BJ (cell line): ENCODE measurements at regions of chr14 and their contacts with region 1.

Region 1: DNA sequence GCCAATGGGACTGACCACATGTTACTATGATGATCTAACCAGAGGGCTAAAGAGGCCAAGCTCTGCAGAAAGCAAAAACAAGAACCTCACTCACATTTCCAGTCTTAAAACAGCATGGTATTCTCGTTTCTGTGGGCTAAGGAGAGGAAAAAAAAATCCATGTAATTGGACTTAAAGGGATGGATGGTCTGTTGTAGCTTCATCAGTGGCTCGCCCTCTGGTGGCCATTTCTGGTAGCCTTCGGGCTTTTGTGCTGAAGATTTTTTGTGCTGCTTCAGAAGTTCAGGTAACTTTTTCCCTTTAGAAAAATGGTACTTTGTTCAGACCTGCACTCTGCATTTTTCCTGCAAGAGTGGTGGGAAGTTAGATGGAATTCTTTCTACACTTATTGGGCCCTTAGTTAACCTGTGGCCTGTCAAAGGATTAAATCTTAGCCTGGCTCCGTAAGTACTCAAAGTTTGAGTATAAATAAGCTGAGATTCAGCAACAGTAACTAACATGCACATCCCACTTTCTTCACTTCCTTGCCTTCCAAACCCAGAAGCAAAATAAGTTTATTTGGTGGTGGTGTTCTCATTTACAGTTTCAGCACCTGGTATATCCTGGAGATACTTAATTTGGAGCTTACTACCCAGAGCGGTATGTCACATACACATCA is 22.3 kb downstream of the DCAF4 start:
- DNase-seq: no peak
- H3K4me3 ChIP-seq: no peak overlapping the region
- H3K27me3 ChIP-seq: no peaks in the 10 kb centered on the region
- CTCF ChIP-seq: peak; percentile 86

Region 2: GRCh38 chr14:72503696-72504368 is 444.8 kb before region 1 on chr14:
- CTCF ChIA-PET with region 1: interaction called, 14 read pairs
- POLR2A ChIA-PET with region 1: no interaction called
- DNase-seq: no peak
- H3K4me3 ChIP-seq: no peak overlapping the region
- H3K27me3 ChIP-seq: peaks cover under 1% of the 10 kb centered on the region; the same call in 1 of the 2 replicates
- CTCF ChIP-seq: no peak

Region 3: DNA sequence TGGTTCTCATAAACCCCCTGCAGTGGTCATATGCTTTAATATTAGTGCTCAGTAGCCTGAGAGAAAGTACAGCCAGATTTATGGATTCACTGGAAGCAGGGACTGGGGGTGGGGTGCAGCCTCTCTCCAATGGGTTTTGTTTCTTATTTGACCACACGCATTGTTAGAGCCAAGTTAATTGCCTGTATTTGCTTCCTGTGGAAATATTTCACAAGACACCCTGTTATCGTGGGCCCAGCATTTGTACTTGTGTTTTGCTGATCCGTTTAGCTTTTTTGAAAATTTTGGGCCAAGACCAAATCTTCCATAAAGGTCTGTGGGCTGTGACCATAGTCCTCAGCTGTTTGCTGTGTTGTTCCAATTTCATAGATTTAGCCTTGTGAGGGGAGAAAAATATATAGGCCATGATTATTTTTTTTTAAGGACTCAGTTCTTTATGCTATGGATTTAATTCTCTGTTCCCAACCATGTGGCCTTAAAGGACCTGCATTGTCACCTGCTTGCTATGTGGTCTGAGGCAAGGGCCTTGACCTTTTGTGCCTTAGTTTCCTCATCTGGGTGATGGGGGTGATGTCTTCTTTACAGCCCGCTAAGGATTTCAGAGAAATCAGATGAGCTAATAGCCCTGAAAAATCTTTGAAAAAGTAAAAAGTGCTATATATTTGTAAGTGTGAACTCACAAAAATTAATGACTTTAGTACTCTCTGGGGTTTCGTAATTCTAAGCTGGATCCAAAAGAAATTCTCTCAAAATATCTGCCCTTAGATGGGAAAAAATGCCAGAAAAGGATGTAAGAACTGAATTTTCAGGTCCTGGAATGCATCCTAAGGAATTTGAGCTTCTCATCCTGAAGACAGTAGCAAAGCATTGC is 425.0 kb before region 1 on chr14:
- CTCF ChIA-PET with region 1: interaction called, 13 read pairs
- POLR2A ChIA-PET with region 1: no interaction called
- DNase-seq: no peak
- H3K4me3 ChIP-seq: no peak overlapping the region
- H3K27me3 ChIP-seq: no peaks in the 10 kb centered on the region
- CTCF ChIP-seq: no peak

Region 4: GRCh38 chr14:72869407-72870329 is 78.9 kb before region 1 on chr14:
- CTCF ChIA-PET with region 1: no interaction called
- POLR2A ChIA-PET with region 1: no interaction called
- DNase-seq: no peak
- H3K4me3 ChIP-seq: no peak overlapping the region
- H3K27me3 ChIP-seq: no peaks in the 10 kb centered on the region
- CTCF ChIP-seq: no peak

Region 5: GRCh38 chr14:72962829-72963312 is 14.3 kb after region 1 on chr14:
- CTCF ChIA-PET with region 1: interaction called, 44 read pairs
- POLR2A ChIA-PET with region 1: no interaction called
- DNase-seq: peak; percentile 34
- H3K4me3 ChIP-seq: no peak overlapping the region
- H3K27me3 ChIP-seq: no peaks in the 10 kb centered on the region
- CTCF ChIP-seq: no peak